ENCODE measurements at regions of chr22 and their contacts with region 1.

Region 1: DNA sequence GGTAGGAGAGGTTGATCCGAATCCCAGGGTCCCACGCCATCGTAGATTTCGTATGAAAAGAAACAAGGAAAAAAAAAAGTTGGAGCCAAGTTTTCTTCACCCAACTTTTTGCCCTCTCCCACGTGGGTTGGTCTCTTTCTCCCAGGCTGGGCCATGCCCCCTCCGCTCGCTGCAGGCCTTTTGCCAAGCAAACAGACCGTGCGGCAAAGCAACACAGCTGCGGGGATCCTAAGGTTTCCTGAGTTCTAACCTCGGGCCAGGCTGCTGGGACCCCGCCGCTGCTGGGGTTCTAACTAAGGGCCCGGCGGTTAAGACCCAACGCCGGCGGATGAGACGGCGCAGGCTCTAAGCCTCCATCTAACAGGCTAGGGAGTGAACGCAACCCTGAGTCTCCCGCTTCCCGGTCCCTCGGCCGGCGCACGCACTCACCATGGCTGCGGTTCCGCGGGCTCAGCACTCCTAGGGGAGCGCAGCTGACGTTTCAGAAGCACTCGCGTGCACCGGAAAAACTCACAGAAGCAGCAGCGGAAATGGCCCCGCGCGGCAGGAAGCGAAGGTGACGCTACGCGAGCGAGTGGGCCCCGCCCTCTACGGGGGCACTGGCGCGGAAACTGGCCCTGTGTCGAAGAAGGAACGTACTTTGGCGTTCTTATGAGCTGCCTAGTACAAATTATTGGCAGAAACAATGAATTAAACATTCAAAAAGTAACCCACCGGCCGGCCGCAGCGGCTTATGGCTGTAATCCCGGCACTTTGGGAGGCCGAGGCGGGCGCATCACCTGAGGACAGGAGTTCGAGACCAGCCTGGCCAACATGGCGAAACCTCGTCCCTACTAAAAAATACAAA is at the start of gene SNU13:
- DNase-seq: peak; percentile 87 to 90
- ATAC-seq: peak; percentile 98 to 99
- H3K4me3 ChIP-seq: peak within 1 kb of the TSS; percentile 74 to 93 (median 84)
- H3K27ac ChIP-seq: peak within 1 kb of the TSS; percentile 92 to 97 (median 94)
- H3K4me1 ChIP-seq: peaks cover 10 to 14% of the 10 kb centered on the region in 2 donors
- H3K27me3 ChIP-seq: no peaks in the 10 kb centered on the region
- CTCF ChIP-seq: peak in 1 of 5 experiments; percentile 16
- POLR2A ChIP-seq: peak; percentile 87 to 90
- total RNA-seq, gene SNU13: 177 to 202 (median 185) TPM

Region 2: GRCh38 chr22:41403532-41404318 is 284.9 kb before region 1 on chr22:
- in situ Hi-C with region 1: no loop called
- intact Hi-C with region 1: no loop called
- DNase-seq: peak; percentile 96 to 99
- ATAC-seq: peak; percentile 74 to 90
- H3K4me3 ChIP-seq: no peak overlapping the region
- H3K27ac ChIP-seq: peak overlapping the region; percentile 78 to 88 (median 83)
- H3K4me1 ChIP-seq: peaks cover 22 to 26% of the 10 kb centered on the region in 2 donors
- H3K27me3 ChIP-seq: no peaks in the 10 kb centered on the region
- CTCF ChIP-seq: peak; percentile 98 to 99 (median 99)
- POLR2A ChIP-seq: no peak

Region 3: DNA sequence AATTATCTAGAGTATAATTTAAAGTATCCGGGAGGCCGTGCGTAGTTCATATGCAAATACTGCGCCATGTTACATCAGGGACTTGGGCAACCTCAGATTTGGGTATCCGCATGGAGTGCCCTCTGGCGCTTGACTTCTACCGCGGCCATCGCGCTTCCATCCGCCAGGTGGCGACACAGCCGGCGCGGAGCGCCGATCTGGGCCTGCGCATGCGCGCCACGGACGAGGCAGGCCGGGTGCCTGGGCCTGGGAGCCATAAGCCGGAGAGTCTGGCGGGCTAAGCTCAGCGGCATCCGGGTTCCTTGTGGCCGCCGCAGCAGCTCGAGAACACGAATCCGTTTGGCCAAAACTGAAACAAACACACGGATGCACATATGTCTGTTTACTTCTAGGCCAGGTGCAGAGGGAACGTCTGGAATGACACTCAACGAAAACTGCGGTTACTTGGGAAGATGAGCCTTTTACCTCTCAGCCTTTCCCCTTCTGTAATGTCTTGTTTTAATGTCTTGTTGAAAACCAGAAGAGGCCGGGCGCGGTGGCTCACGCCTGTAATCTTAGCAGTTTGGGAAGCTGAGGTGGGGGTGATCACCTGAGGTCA is 21.8 kb before region 1 on chr22:
- in situ Hi-C with region 1: no loop called
- intact Hi-C with region 1: loop called (anchors 1 kb)
- DNase-seq: peak; percentile 78 to 87
- ATAC-seq: peak; percentile 93 to 94
- H3K4me3 ChIP-seq: peak overlapping the region; percentile 41 to 72 (median 52)
- H3K27ac ChIP-seq: peak overlapping the region; percentile 71 to 91 (median 84)
- H3K4me1 ChIP-seq: peaks cover 0 to 9% of the 10 kb centered on the region in 2 donors
- H3K27me3 ChIP-seq: no peaks in the 10 kb centered on the region
- CTCF ChIP-seq: peak; percentile 93 to 99 (median 96)
- POLR2A ChIP-seq: peak; percentile 51 to 66

Region 4: DNA sequence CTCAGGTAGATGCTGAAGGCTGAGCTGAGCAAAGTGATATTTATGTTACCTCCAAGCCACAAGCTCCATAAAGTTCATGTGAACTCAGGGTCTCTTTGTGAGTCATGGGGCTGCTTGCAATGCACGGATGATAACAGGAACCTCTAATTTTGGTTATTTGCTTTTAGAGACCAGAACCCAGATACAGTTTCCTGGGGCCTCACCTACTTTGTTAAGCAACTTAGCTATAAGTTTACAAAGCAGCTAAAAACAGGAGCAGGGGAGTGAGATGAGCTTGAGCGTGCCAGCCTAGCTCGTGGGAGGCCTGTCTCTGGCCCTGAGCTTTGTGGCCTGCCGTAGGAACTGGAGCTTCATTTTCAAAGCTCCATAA is 173.6 kb after region 1 on chr22:
- in situ Hi-C with region 1: no loop called
- intact Hi-C with region 1: no loop called
- DNase-seq: no peak
- ATAC-seq: peak in 1 of 2 donors; percentile 39
- H3K4me3 ChIP-seq: no peak overlapping the region
- H3K27ac ChIP-seq: peak overlapping the region; percentile 47 to 75 (median 70)
- H3K4me1 ChIP-seq: peaks cover 26 to 29% of the 10 kb centered on the region in 2 donors
- H3K27me3 ChIP-seq: no peaks in the 10 kb centered on the region
- CTCF ChIP-seq: no peak
- POLR2A ChIP-seq: no peak

Region 5: GRCh38 chr22:42079319-42080251 is 391.0 kb after region 1 on chr22 and contains the start of gene SMDT1:
- in situ Hi-C with region 1: no loop called
- intact Hi-C with region 1: loop called (anchors 2 kb)
- DNase-seq: peak; percentile 99
- ATAC-seq: peak; percentile 92 to 94
- H3K4me3 ChIP-seq: peak within 1 kb of the TSS; percentile 69 to 89 (median 86)
- H3K27ac ChIP-seq: peak within 1 kb of the TSS; percentile 95 to 100 (median 100)
- H3K4me1 ChIP-seq: peaks cover 30 to 37% of the 10 kb centered on the region in 2 donors
- H3K27me3 ChIP-seq: no peaks in the 10 kb centered on the region
- CTCF ChIP-seq: peak in 1 of 5 experiments; percentile 26
- POLR2A ChIP-seq: peak; percentile 97
- total RNA-seq, gene SMDT1: 7.9 to 14.6 (median 9.8) TPM